ENCODE measurements at regions of chr14 and their contacts with region 1.

Region 1: GRCh38 chr14:78598041-78598920 is 428.1 kb downstream of the NRXN3 start:
- DNase-seq: peak; percentile 52 to 64
- H3K4me3 ChIP-seq: no peak overlapping the region
- H3K4me1 ChIP-seq: no peaks in the 10 kb centered on the region
- H3K27me3 ChIP-seq: no peaks in the 10 kb centered on the region

Region 2: GRCh38 chr14:77862154-77862786 is 736.0 kb before region 1 on chr14:
- in situ Hi-C with region 1: loop called (anchors 25 kb)
- DNase-seq: peak; percentile 28 to 92
- H3K4me3 ChIP-seq: no peak overlapping the region
- H3K4me1 ChIP-seq: no peaks in the 10 kb centered on the region
- H3K27me3 ChIP-seq: no peaks in the 10 kb centered on the region

Measured in HAP-1 (cell line).